Psoas muscle (tissue), 8 donors: ENCODE measurements at regions of chr1 and their contacts with region 1.

Region 1: GRCh38 chr1:37890378-37891014 is 31.1 kb upstream of the MTF1 start:
- DNase-seq: no peak
- ATAC-seq: peak in 3 of 4 donors; percentile 44 to 80 (median 74)
- H3K4me3 ChIP-seq: no peak overlapping the region
- H3K27ac ChIP-seq: peak overlapping the region; percentile 50
- H3K4me1 ChIP-seq: peaks cover 5% of the 10 kb centered on the region
- H3K27me3 ChIP-seq: no peaks in the 10 kb centered on the region
- CTCF ChIP-seq: peak; percentile 62

Region 2: GRCh38 chr1:37588939-37589338 is 301.6 kb before region 1 on chr1:
- intact Hi-C with region 1: no loop called
- DNase-seq: no peak
- ATAC-seq: no peak
- H3K4me3 ChIP-seq: no peak overlapping the region
- H3K27ac ChIP-seq: no peak overlapping the region
- H3K4me1 ChIP-seq: no peaks in the 10 kb centered on the region
- H3K27me3 ChIP-seq: no peaks in the 10 kb centered on the region
- CTCF ChIP-seq: no peak

Region 3: GRCh38 chr1:37931361-37932158 is 41.1 kb after region 1 on chr1:
- intact Hi-C with region 1: loop called in 1 of 2 experiments (anchors 5 kb)
- DNase-seq: peak; percentile 96 to 97
- ATAC-seq: peak; percentile 95 to 99 (median 96)
- H3K4me3 ChIP-seq: peak overlapping the region; percentile 83
- H3K27ac ChIP-seq: peak overlapping the region; percentile 73
- H3K4me1 ChIP-seq: peaks cover 23% of the 10 kb centered on the region
- H3K27me3 ChIP-seq: no peaks in the 10 kb centered on the region
- CTCF ChIP-seq: no peak

Region 4: GRCh38 chr1:37978541-37978940 is 88.0 kb after region 1 on chr1:
- intact Hi-C with region 1: loop called (anchors 1 to 5 kb)
- DNase-seq: no peak
- ATAC-seq: peak in 2 of 4 donors; percentile 19 to 30
- H3K4me3 ChIP-seq: no peak overlapping the region
- H3K27ac ChIP-seq: no peak overlapping the region
- H3K4me1 ChIP-seq: no peaks in the 10 kb centered on the region
- H3K27me3 ChIP-seq: no peaks in the 10 kb centered on the region
- CTCF ChIP-seq: no peak